ENCODE measurements at regions of chr5 and their contacts with region 1.

Region 1: DNA sequence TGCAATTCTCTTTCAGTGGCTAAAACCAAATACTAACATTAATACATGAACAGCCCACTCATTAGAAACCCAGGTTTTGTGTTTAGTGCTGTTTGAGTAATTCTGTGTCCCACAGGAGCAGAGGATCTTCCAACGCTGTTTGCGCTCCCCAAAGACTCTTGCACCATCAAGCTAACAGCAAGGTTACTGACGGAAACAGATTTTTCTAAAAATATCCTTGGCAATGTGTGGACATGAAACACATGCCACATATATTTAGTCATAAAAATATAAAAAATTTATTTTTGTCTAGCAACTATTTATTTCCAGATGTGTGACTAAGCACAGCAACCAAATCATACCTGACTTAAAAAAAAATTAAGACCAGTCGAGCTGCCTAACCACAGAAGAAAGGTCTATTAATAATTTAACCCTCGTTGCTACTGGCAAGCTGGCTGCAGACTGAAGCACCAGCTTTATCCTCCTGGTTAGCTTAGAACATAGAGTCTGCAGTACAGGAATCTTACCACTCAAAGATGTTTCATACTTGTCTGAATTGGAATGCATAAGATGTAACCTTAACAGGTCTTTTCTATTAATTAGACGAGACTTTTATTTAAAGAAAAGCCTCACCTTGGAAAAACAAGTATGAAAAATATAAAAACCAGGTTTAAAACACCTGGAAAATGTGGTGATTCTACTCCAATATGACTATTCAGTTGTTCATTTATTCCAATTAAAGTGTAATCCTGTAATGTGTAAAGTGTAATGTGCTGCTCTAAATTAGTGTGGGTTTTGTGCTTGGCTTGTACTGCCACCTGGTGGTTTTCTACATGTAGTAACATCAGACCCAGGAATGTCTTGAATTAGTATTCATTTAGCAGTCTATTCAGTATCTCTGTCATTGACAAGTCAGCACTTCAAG is 272.5 kb downstream of the EPB41L4A start:
- DNase-seq: peak; percentile 76
- ATAC-seq: peak; percentile 98
- H3K4me3 ChIP-seq: no peak overlapping the region
- H3K27ac ChIP-seq: no peak overlapping the region
- H3K4me1 ChIP-seq: peaks cover 4% of the 10 kb centered on the region; the same call in 1 of the 2 replicates
- H3K27me3 ChIP-seq: no peaks in the 10 kb centered on the region
- CTCF ChIP-seq: peak; percentile 91

Region 2: GRCh38 chr5:111158105-111158744 is 988.4 kb before region 1 on chr5:
- CTCF ChIA-PET with region 1: no interaction called
- POLR2A ChIA-PET with region 1: no interaction called
- intact Hi-C with region 1: loop called (anchors 1 kb)
- DNase-seq: peak; percentile 92
- ATAC-seq: peak; percentile 84
- H3K4me3 ChIP-seq: no peak overlapping the region
- H3K27ac ChIP-seq: no peak overlapping the region
- H3K4me1 ChIP-seq: no peaks in the 10 kb centered on the region
- H3K27me3 ChIP-seq: no peaks in the 10 kb centered on the region
- CTCF ChIP-seq: peak; percentile 98

Region 3: DNA sequence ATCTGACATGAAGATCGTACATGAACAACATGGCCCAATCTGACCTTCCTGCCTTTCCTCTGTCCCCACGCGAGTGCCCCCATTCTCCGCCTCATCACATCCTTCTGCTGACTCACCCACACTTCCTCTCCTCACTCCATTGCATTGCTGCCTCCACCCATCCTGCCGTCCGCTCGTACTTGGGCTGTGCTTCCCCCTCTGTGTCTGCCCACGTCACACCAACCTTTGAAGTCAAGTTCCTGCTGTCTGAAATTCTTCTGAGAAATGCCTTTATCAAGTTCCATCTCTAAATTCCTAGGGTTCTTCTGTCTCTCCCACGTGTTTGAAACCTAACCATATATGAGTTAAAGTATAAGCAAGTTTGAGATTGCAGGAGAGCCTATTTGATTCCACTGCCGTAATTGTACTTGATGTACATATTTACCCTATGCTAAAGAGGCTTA is 616.3 kb before region 1 on chr5:
- CTCF ChIA-PET with region 1: interaction called, 19 read pairs
- POLR2A ChIA-PET with region 1: no interaction called
- intact Hi-C with region 1: loop called (anchors 1 kb)
- DNase-seq: peak; percentile 22
- ATAC-seq: peak; percentile 55; the same call in 1 of the 2 replicates
- H3K4me3 ChIP-seq: no peak overlapping the region
- H3K27ac ChIP-seq: no peak overlapping the region
- H3K4me1 ChIP-seq: peaks cover 6% of the 10 kb centered on the region; the same call in 1 of the 2 replicates
- H3K27me3 ChIP-seq: 0 out of 2 replicates have a peak, but pooled peaks cover 4% of the 10 kb centered on the region
- CTCF ChIP-seq: no peak

Region 4: GRCh38 chr5:111550279-111551020 is 596.1 kb before region 1 on chr5:
- CTCF ChIA-PET with region 1: no interaction called
- POLR2A ChIA-PET with region 1: no interaction called
- intact Hi-C with region 1: loop called (anchors 1 kb)
- DNase-seq: peak; percentile 97
- ATAC-seq: peak; percentile 89
- H3K4me3 ChIP-seq: no peak overlapping the region
- H3K27ac ChIP-seq: peak overlapping the region; percentile 54
- H3K4me1 ChIP-seq: peaks cover 21% of the 10 kb centered on the region
- H3K27me3 ChIP-seq: no peaks in the 10 kb centered on the region
- CTCF ChIP-seq: peak; percentile 80

Region 5: DNA sequence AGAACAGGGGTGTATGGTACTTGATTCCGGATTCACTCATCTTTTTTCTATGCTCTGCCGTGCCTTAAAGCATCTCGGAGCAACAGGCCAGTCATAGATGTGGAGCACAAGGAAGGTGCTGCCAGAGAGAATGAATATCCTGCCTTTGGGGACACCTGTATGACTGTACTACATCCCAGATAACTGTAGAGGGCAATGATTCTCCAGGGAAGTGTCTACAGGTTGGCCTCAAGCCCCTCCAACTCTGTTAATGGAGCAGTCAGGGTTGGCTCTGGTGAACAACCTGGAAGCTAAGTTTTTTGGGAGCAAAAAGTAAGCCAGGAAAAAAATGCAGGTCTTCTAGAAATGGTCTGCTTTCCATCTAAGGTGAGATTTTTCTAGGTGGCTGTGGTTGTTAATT is 460.6 kb before region 1 on chr5:
- CTCF ChIA-PET with region 1: no interaction called
- POLR2A ChIA-PET with region 1: no interaction called
- intact Hi-C with region 1: loop called (anchors 1 kb)
- DNase-seq: peak; percentile 65
- ATAC-seq: peak; percentile 69
- H3K4me3 ChIP-seq: no peak overlapping the region
- H3K27ac ChIP-seq: no peak overlapping the region
- H3K4me1 ChIP-seq: peaks cover 17% of the 10 kb centered on the region
- H3K27me3 ChIP-seq: no peaks in the 10 kb centered on the region
- CTCF ChIP-seq: peak; percentile 77

Region 6: GRCh38 chr5:111830333-111830732 is 316.2 kb before region 1 on chr5:
- CTCF ChIA-PET with region 1: no interaction called
- POLR2A ChIA-PET with region 1: no interaction called
- intact Hi-C with region 1: loop called (anchors 1 kb)
- DNase-seq: peak; percentile 98
- ATAC-seq: peak; percentile 89
- H3K4me3 ChIP-seq: no peak overlapping the region
- H3K27ac ChIP-seq: peak overlapping the region; percentile 33
- H3K4me1 ChIP-seq: peaks cover 15% of the 10 kb centered on the region
- H3K27me3 ChIP-seq: no peaks in the 10 kb centered on the region
- CTCF ChIP-seq: no peak

Region 7: GRCh38 chr5:111859533-111860270 is 286.9 kb before region 1 on chr5:
- CTCF ChIA-PET with region 1: no interaction called
- POLR2A ChIA-PET with region 1: no interaction called
- intact Hi-C with region 1: loop called (anchors 1 kb)
- DNase-seq: peak; percentile 9
- ATAC-seq: no peak
- H3K4me3 ChIP-seq: no peak overlapping the region
- H3K27ac ChIP-seq: no peak overlapping the region
- H3K4me1 ChIP-seq: no peaks in the 10 kb centered on the region
- H3K27me3 ChIP-seq: no peaks in the 10 kb centered on the region
- CTCF ChIP-seq: no peak